ENCODE measurements at regions of chr3 and their contacts with region 1.

Region 1: DNA sequence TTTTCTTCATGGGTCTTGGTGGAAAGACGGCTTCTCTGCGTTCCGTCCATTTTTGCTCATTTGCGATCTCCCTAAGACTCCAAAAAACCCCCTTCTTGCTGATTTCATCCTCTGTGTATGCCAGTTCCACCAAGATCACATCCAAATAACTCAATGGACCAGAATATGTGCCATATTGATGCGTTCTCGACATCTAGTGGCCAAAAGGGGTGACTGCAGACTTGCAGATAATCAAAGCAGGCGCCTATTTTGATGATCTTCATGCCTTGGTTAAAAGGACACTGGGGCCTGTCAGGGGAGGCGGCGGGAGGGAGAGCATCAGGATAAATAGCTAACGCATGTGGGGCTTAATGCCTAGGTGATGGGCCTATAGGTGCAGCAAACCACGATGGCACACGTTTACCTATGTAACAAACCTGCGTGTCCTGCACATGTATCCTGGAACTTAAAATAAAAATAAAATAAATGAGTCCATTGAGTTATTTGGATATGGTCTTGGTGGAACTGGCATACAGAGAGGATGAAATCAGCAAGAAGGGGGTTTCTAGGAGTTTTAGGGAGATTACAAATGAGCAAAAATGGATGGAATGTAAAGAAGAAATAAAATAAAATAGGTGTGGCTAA is 104.2 kb upstream of the RAD18 start:
- DNase-seq: peak; percentile 58 to 75 (median 70)
- ATAC-seq: peak; percentile 94
- H3K4me3 ChIP-seq: no peak overlapping the region
- H3K27ac ChIP-seq: no peak overlapping the region
- H3K4me1 ChIP-seq: no peaks in the 10 kb centered on the region
- H3K27me3 ChIP-seq: peaks cover 0 to 17% of the 10 kb centered on the region in 2 experiments; a peak in 2 of 5 replicates
- CTCF ChIP-seq: peak; percentile 89 to 97 (median 89)
- EP300 ChIP-seq: no peak
- POLR2A ChIP-seq: no peak
- RAD21 ChIP-seq: peak; percentile 86 to 92

Region 2: DNA sequence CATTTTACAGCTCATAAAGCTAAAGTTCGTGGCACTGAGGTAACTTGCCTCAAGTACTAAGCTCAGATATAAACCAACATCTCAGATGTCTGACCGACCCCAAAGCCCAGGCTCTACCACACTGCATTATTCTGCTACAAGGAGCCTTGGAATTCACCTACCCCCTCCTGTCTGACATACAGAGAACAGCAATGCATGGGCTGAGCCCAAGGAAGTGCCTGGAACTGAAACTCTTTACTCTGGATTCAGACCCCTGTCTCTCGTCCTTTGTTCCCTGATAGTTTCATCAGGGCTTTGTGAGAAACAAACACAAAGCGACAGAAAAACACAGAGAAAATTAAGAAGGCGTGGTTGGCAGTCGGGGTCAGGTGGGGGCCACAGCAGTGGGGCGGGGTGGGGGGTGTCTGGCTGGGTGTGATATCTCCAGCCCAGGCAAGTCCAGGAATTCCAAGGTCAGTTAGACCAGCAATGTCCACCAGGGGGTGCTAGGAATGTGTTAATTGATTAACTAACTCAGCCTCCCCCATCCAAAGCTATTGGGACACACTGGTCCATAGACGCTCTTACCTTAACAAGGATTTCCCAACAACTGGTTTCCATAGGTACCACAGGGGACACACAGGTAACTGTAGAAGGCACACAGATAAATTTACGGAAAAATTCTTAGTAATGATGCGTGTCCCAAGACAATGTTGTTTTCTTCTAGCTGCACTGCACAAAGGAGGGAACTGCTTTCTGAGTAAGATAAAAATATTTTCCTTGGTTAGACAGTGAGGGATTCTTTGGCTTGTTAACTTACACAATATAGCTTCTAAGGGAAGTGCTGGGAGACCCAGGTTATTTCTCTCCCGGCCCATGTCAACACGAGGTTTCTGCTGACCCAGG is 404.0 kb before region 1 on chr3:
- CTCF ChIA-PET with region 1: interaction called, 5 read pairs
- POLR2A ChIA-PET with region 1: no interaction called
- in situ Hi-C with region 1: no loop called
- intact Hi-C with region 1: loop called (anchors 5 kb)
- DNase-seq: peak; percentile 87 to 91 (median 90)
- ATAC-seq: peak; percentile 97
- H3K4me3 ChIP-seq: no peak overlapping the region
- H3K27ac ChIP-seq: no peak overlapping the region
- H3K4me1 ChIP-seq: no peaks in the 10 kb centered on the region; a peak in 2 of 5 replicates
- H3K27me3 ChIP-seq: peaks cover 9 to 42% of the 10 kb centered on the region in 2 experiments
- CTCF ChIP-seq: peak; percentile 65 to 76 (median 69)
- EP300 ChIP-seq: no peak
- POLR2A ChIP-seq: no peak
- RAD21 ChIP-seq: peak; percentile 18 to 65; a peak in 3 of 4 replicates

Region 3: GRCh38 chr3:8769088-8769822 is 298.2 kb before region 1 on chr3 and contains the start of gene OXTR:
- CTCF ChIA-PET with region 1: interaction called, 3 read pairs
- POLR2A ChIA-PET with region 1: no interaction called
- in situ Hi-C with region 1: no loop called
- intact Hi-C with region 1: loop called (anchors 5 kb)
- DNase-seq: peak; percentile 76 to 93 (median 90)
- ATAC-seq: peak; percentile 100
- H3K4me3 ChIP-seq: no peak within 1 kb of the TSS
- H3K27ac ChIP-seq: no peak within 1 kb of the TSS
- H3K4me1 ChIP-seq: peaks cover 0 to 12% of the 10 kb centered on the region in 2 experiments; a peak in 2 of 5 replicates
- H3K27me3 ChIP-seq: peaks cover 4 to 12% of the 10 kb centered on the region in 2 experiments
- CTCF ChIP-seq: peak; percentile 97 to 99 (median 98)
- EP300 ChIP-seq: no peak
- POLR2A ChIP-seq: no peak
- RAD21 ChIP-seq: peak; percentile 70 to 90
- polyA plus RNA-seq, gene OXTR: 0.14 to 0.22 TPM

Region 4: DNA sequence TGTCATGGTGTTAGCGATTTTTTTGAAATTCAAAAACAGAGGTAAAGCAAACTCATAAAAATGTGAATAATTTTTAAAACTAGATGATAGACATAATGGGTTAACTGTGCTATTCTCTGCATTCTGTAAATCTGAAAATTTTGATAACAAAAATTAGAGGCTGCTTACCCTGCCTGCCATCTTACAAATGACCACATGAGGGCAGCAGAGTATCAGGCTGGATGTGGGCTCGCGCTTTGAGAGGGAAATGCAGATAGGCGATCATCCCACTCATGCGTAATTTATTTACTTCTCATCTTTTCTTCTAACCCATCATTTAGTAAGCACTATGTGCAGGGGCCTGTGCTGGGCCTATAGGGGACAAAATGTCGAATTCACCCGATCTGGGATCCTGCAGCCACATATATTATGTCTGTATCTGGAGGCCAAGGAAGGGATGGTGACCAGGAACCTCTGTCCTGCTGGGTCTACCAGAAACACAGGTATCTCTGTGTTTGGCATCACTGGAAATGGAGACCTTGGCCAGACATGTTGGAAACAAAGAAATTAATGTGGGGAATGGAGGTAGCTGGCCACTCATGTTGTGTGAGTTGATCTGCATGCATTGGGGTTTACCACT is 96.4 kb before region 1 on chr3:
- CTCF ChIA-PET with region 1: interaction called, 23 read pairs
- POLR2A ChIA-PET with region 1: no interaction called
- in situ Hi-C with region 1: loop called (anchors 5 kb)
- intact Hi-C with region 1: loop called (anchors 1 kb)
- DNase-seq: peak; percentile 76 to 82 (median 78)
- ATAC-seq: peak; percentile 70
- H3K4me3 ChIP-seq: no peak overlapping the region
- H3K27ac ChIP-seq: no peak overlapping the region
- H3K4me1 ChIP-seq: peaks cover 0 to 5% of the 10 kb centered on the region in 2 experiments; a peak in 1 of 5 replicates
- H3K27me3 ChIP-seq: peaks cover 3 to 14% of the 10 kb centered on the region in 2 experiments; a peak in 4 of 5 replicates
- CTCF ChIP-seq: peak; percentile 90 to 98 (median 94)
- EP300 ChIP-seq: no peak
- POLR2A ChIP-seq: no peak
- RAD21 ChIP-seq: peak; percentile 96 to 98

Region 5: DNA sequence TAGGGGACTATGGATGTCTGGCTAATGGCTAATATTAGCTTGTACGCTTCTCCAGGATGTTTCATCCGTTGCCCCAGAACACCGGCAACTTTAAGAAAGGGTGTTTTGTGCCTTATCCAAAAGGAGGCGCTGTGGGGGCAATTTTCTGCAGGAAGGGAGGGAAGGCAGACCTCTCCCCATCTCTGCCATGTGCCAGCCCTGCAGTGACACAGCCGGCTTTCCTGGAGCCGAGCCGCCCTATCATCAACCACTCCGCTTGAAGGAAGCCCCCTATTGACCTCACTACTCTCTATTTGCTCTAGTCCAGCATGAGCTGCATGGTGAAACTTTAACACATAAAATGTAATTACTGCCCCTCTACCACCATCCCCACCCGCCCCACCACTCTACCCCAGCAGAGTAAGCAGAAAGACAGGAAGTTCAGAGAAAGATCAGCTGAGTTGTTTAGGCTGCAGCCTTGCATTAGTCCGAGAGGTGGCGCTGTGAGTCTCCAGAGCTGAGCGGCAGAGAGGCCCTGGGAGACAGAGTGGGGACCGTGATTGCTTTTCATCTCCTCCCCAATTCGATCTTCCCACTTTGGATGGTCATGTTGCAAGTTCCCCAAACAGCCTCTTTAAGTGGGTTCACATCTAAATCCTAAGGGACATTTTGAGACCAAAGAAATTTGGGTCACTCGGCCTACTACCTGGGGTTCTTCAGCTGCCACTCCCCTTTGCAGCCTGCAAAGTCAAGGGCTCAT is 79.7 kb before region 1 on chr3:
- CTCF ChIA-PET with region 1: interaction called, 7 read pairs
- POLR2A ChIA-PET with region 1: no interaction called
- in situ Hi-C with region 1: no loop called
- intact Hi-C with region 1: loop called (anchors 1 kb)
- DNase-seq: peak; percentile 69 to 85 (median 81)
- ATAC-seq: peak; percentile 94
- H3K4me3 ChIP-seq: no peak overlapping the region
- H3K27ac ChIP-seq: no peak overlapping the region
- H3K4me1 ChIP-seq: peaks cover 0 to 8% of the 10 kb centered on the region in 2 experiments; a peak in 2 of 5 replicates
- H3K27me3 ChIP-seq: peaks cover 49 to 81% of the 10 kb centered on the region in 2 experiments
- CTCF ChIP-seq: peak; percentile 85 to 89 (median 88)
- EP300 ChIP-seq: no peak
- POLR2A ChIP-seq: no peak
- RAD21 ChIP-seq: peak; percentile 52 to 77; a peak in 3 of 4 replicates

Region 6: GRCh38 chr3:9201266-9201665 is 133.8 kb after region 1 on chr3:
- CTCF ChIA-PET with region 1: no interaction called
- POLR2A ChIA-PET with region 1: no interaction called
- in situ Hi-C with region 1: no loop called
- intact Hi-C with region 1: no loop called
- DNase-seq: no peak
- ATAC-seq: peak; percentile 38; the same call in 1 of the 3 replicates
- H3K4me3 ChIP-seq: no peak overlapping the region
- H3K27ac ChIP-seq: no peak overlapping the region
- H3K4me1 ChIP-seq: peaks cover 4 to 6% of the 10 kb centered on the region in 2 experiments
- H3K27me3 ChIP-seq: peaks cover 13 to 37% of the 10 kb centered on the region in 2 experiments
- CTCF ChIP-seq: 0 out of 6 replicates have a peak, but pooled peaks of 1 of the 3 experiments have one; percentile 2
- EP300 ChIP-seq: no peak
- POLR2A ChIP-seq: no peak
- RAD21 ChIP-seq: no peak; a peak in 1 of 4 replicates

Measured in K562 (cell line).